Left colon (tissue), 2 donors: ENCODE measurements at regions of chr11 and their contacts with region 1.

Region 1: GRCh38 chr11:134033696-134034491 is 35.0 kb upstream of the JAM3 start:
- DNase-seq: peak; percentile 72 to 83
- ATAC-seq: peak; percentile 76

Region 2: GRCh38 chr11:133947321-133947756 is 86.6 kb before region 1 on chr11:
- intact Hi-C with region 1: loop called in 1 of 2 experiments (anchors 5 kb)
- DNase-seq: no peak
- ATAC-seq: peak; percentile 59

Region 3: GRCh38 chr11:134139873-134140331 is 106.0 kb after region 1 on chr11:
- intact Hi-C with region 1: no loop called
- DNase-seq: peak; percentile 37 to 39
- ATAC-seq: peak; percentile 84